Heart right ventricle (tissue), 16 donors: ENCODE measurements at regions of chr9 and their contacts with region 1.

Region 1: GRCh38 chr9:7073706-7074105 is 315.9 kb downstream of the KDM4C start:
- DNase-seq: no peak
- ATAC-seq: no peak
- H3K4me3 ChIP-seq: no peak overlapping the region
- H3K27ac ChIP-seq: no peak overlapping the region
- H3K4me1 ChIP-seq: peaks cover 0 to 4% (median 0%) of the 10 kb centered on the region in 9 donors
- H3K27me3 ChIP-seq: no peaks in the 10 kb centered on the region
- CTCF ChIP-seq: no peak

Region 2: DNA sequence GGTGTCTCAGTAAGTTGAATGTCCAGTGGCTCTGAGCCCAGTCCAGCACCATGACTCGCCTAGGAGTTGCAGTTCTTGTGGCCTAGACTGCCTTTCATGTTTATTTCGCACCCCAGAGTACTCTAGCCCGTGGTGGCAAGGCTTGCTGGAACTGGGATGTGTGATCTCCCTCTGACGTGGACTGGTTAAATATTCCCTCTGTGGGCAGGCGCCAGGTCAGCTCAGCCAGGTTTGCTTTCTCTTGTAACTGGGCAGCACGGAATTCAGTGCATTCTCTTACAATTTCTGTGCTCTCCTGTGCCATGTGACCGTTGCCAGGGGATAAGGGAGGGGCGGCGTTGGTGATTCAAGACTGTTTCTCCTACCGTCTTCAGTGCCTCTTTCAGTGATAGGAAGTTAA is 45.1 kb before region 1 on chr9:
- intact Hi-C with region 1: loop called in 1 of 10 experiments (anchors 5 kb)
- DNase-seq: no peak
- ATAC-seq: no peak
- H3K4me3 ChIP-seq: no peak overlapping the region
- H3K27ac ChIP-seq: no peak overlapping the region
- H3K4me1 ChIP-seq: no peaks in the 10 kb centered on the region
- H3K27me3 ChIP-seq: no peaks in the 10 kb centered on the region
- CTCF ChIP-seq: no peak